ENCODE measurements at regions of chr15 and their contacts with region 1.

Region 1: GRCh38 chr15:99733268-99734039 is at the start of gene LYSMD4:
- DNase-seq: peak; percentile 93

Region 2: GRCh38 chr15:99090011-99090699 is 643.3 kb before region 1 on chr15:
- in situ Hi-C with region 1: no loop called
- DNase-seq: peak; percentile 25

Region 3: DNA sequence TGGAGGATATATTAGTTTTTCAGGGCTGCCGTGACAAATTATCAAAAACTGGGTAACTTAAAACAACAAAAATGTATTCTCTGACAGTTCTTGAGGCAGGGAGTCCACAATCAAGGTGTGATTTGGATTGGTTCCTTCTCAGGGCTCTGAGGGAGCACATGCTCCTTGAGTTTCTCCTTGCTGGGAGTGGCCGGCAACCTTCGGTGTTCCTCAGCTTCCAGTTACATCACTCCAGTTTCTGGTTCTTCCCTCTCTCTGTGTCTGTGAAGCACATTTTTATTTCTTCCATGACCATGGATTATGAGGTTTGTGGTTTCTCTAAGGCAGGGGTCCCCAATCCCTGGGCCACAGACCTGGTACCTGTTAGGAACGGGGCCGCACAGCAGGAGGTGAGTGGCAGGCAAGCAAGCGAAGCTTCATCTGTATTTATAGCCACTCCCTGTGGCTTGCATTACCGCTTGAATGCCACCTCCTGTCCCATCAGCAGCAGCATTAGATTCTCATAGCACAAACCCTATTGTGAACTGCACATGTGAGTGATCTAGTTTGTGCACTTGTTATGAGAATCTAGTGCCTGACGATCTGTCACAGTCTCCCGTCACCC is 457.8 kb before region 1 on chr15:
- in situ Hi-C with region 1: loop called (anchors 25 kb)
- DNase-seq: no peak